Activated B cell treated with CpG ODN at 0.5 μM for 24 hours (primary cell): ENCODE measurements at regions of chr3 and their contacts with region 1.

Region 1: GRCh38 chr3:195442573-195443390 is at the start of gene ACAP2:
- DNase-seq: peak; percentile 100
- ATAC-seq: peak; percentile 89
- H3K4me3 Mint-ChIP-seq: peak within 1 kb of the TSS; percentile 95
- H3K27ac Mint-ChIP-seq: peak within 1 kb of the TSS; percentile 93
- H3K4me1 Mint-ChIP-seq: peaks cover 42% of the 10 kb centered on the region
- H3K27me3 Mint-ChIP-seq: no peaks in the 10 kb centered on the region
- CTCF ChIP-seq: no peak
- total RNA-seq, gene ACAP2: 75.5 and 89.7 TPM in 2 replicates

Region 2: GRCh38 chr3:194486540-194487288 is 956.1 kb before region 1 on chr3 and contains the start of gene ATP13A3:
- CTCF ChIA-PET with region 1: no interaction called
- POLR2A ChIA-PET with region 1: no interaction called
- intact Hi-C with region 1: loop called (anchors 2 kb)
- DNase-seq: peak; percentile 86
- ATAC-seq: peak; percentile 75
- H3K4me3 Mint-ChIP-seq: peak within 1 kb of the TSS; percentile 91
- H3K27ac Mint-ChIP-seq: peak within 1 kb of the TSS; percentile 88
- H3K4me1 Mint-ChIP-seq: peaks cover 63% of the 10 kb centered on the region
- H3K27me3 Mint-ChIP-seq: no peaks in the 10 kb centered on the region
- CTCF ChIP-seq: no peak
- total RNA-seq, gene ATP13A3: 79.8 and 91.9 TPM in 2 replicates

Region 3: DNA sequence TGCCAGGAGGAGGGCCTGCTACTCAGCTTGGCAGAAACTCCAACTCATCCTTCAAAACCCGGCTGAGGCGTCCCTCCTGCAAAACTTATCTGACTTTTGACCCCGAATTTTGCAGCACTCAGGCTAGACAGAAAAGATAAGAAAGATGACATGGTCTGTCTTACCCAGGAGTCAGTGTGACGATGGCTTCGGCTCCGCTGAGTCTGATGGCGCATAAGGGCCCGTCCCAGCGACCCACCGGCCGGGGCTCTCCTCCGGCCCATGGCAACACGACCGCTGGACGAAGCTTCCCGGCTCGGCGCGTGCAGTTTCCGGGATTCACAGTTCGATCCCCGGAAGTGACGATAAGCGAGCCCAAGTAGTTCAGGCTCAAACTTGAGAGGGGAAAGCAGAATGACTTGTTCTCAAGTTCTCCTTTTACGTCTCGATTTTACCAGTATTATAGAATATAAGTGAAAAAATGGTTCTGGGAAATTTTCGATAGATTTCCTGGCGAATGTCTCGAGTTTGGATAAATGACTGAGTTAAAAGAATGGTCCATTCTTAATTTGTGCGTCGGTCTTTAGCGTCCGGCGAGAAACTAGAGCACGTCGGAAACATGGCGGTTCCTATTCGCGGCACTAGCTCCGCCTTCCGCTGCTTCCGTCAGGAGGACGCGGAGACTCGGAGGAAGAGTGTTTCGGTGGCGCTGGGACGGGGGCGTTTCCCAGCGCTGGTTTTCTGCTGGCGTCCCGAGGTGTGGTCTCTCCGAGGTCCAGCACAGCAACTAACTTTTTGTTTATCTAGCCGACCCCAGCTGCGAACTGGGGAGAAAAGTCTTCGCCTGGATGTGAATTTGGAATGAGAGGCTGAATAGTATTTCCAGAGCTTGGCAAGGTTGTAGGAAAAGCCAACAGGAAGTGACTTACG is 770.6 kb before region 1 on chr3 and contains the start of gene LSG1:
- CTCF ChIA-PET with region 1: interaction called, 4 read pairs
- POLR2A ChIA-PET with region 1: interaction called, 3 read pairs
- intact Hi-C with region 1: loop called (anchors 2 kb)
- DNase-seq: peak; percentile 80
- ATAC-seq: peak; percentile 94
- H3K4me3 Mint-ChIP-seq: peak within 1 kb of the TSS; percentile 99
- H3K27ac Mint-ChIP-seq: peak within 1 kb of the TSS; percentile 99
- H3K4me1 Mint-ChIP-seq: peaks cover 22% of the 10 kb centered on the region
- H3K27me3 Mint-ChIP-seq: peaks cover 6% of the 10 kb centered on the region
- CTCF ChIP-seq: no peak
- total RNA-seq, gene LSG1: 55.1 and 55.4 TPM in 2 replicates

Region 4: GRCh38 chr3:195271116-195271858 is 171.5 kb before region 1 on chr3 and contains the start of gene XXYLT1:
- CTCF ChIA-PET with region 1: interaction called, 5 read pairs
- POLR2A ChIA-PET with region 1: interaction called, 11 read pairs
- intact Hi-C with region 1: loop called (anchors 1 kb)
- DNase-seq: peak; percentile 84
- ATAC-seq: peak; percentile 87
- H3K4me3 Mint-ChIP-seq: peak within 1 kb of the TSS; percentile 87
- H3K27ac Mint-ChIP-seq: peak within 1 kb of the TSS; percentile 82
- H3K4me1 Mint-ChIP-seq: peaks cover 20% of the 10 kb centered on the region
- H3K27me3 Mint-ChIP-seq: no peaks in the 10 kb centered on the region
- CTCF ChIP-seq: peak; percentile 77
- total RNA-seq, gene XXYLT1: 7.6 and 7.9 TPM in 2 replicates

Region 5: DNA sequence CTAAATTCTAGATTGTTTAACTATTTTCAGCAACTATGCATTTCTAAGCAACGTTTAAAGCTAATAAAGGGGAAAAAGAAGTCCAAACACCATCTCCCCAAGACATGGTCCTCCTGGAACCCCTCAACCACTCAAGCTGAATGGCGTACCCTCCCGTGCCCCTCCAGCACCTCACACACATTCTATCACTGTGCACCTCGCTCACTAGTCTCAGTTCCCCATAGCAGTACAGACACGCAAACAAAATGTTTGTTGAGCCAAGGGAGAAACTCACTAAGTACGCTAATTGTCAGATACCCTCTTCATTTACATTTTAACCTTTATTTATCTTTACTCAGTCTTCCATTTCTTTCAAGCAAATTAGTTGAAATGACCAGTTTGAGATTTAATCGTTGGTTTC is 48.8 kb before region 1 on chr3:
- CTCF ChIA-PET with region 1: no interaction called
- POLR2A ChIA-PET with region 1: interaction called, 18 read pairs
- intact Hi-C with region 1: no loop called
- DNase-seq: no peak
- ATAC-seq: peak; percentile 79
- H3K4me3 Mint-ChIP-seq: peak overlapping the region; percentile 30
- H3K27ac Mint-ChIP-seq: peak overlapping the region; percentile 35
- H3K4me1 Mint-ChIP-seq: peaks cover 51% of the 10 kb centered on the region
- H3K27me3 Mint-ChIP-seq: no peaks in the 10 kb centered on the region
- CTCF ChIP-seq: no peak

Region 6: GRCh38 chr3:195458316-195458717 is 15.5 kb after region 1 on chr3:
- CTCF ChIA-PET with region 1: no interaction called
- POLR2A ChIA-PET with region 1: interaction called, 3 read pairs
- intact Hi-C with region 1: loop called (anchors 1 kb)
- DNase-seq: no peak
- ATAC-seq: peak; percentile 84
- H3K4me3 Mint-ChIP-seq: no peak overlapping the region
- H3K27ac Mint-ChIP-seq: peak overlapping the region; percentile 68
- H3K4me1 Mint-ChIP-seq: peaks cover 6% of the 10 kb centered on the region
- H3K27me3 Mint-ChIP-seq: no peaks in the 10 kb centered on the region
- CTCF ChIP-seq: no peak

Region 7: DNA sequence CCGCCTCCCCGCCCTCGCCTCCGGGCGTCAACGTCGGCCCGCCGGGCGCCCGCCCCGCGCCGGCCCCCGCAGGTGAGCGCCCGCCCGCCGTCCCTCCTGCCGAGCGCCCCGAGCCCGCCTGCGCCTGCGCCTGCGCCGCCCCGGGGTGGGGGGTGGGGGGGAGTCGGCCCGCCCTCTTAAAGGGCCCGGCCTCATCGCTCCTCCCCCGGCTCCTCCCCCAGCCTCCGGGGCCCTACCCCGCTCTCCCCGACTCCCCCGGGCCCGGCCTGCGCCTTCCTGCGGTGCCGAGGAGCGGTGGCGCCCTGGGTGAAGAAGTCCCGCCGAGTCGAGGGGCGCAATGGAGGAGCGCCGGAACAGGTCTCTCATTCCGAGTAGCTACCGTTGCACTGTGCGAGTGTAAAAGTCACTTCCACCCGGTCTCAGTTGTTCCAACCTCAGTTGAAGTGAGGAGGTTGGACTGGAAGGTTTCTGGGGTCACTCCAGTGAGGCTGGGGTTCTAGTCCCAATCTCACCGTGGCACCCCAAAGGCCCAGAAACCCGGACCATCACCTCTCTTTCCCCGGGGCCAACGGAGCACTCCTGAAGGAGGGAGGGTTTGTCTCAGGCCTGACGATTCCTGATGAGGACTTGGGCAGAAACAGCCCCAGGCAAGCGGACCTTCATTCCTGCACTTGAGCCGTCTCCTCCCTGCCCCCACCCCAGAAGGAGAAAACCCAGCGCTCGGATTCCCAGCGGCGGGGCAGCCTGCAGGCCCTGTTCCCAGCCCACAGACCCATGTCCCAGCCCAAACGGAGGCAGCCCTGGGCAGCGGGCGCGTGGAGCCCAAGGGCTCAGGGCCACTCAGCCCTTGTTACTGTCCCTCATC is 467.1 kb after region 1 on chr3:
- CTCF ChIA-PET with region 1: no interaction called
- POLR2A ChIA-PET with region 1: no interaction called
- intact Hi-C with region 1: loop called (anchors 2 kb)
- DNase-seq: peak; percentile 88
- ATAC-seq: peak; percentile 65
- H3K4me3 Mint-ChIP-seq: peak overlapping the region; percentile 78
- H3K27ac Mint-ChIP-seq: peak overlapping the region; percentile 78
- H3K4me1 Mint-ChIP-seq: peaks cover 44% of the 10 kb centered on the region
- H3K27me3 Mint-ChIP-seq: no peaks in the 10 kb centered on the region
- CTCF ChIP-seq: no peak